Caco-2 (cell line): ENCODE measurements at regions of chr2 and their contacts with region 1.

Region 1: GRCh38 chr2:20326163-20326780 is 24.4 kb downstream of the PUM2 start:
- DNase-seq: peak; percentile 63 to 65
- H3K4me3 ChIP-seq: no peak overlapping the region
- H3K4me3 Mint-ChIP-seq: no peak overlapping the region
- H3K27ac Mint-ChIP-seq: no peak overlapping the region
- H3K4me1 ChIP-seq: peaks cover 19% of the 10 kb centered on the region
- H3K4me1 Mint-ChIP-seq: peaks cover 27% of the 10 kb centered on the region
- H3K27me3 ChIP-seq: no peaks in the 10 kb centered on the region
- H3K27me3 Mint-ChIP-seq: no peaks in the 10 kb centered on the region
- CTCF ChIP-seq: peak; percentile 76 to 90

Region 2: DNA sequence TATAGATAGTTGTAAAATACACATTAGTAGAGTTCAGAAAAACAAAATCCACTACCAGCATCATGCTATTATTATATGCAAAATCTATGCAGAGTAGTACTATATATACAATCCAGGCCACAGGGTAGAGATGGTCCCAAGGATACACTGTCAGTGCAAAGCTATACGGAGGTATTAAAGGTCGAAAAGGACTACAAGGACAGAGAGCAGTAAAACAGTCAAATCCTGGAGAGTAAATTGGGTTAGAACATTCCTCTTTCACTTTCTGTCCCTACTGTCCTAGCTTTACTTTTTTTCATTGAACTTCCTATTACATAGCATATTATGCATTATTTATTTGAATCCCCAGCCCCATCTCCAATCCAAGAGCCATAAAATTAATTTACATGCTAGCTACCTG is 61.6 kb before region 1 on chr2:
- CTCF ChIA-PET with region 1: no interaction called
- POLR2A ChIA-PET with region 1: no interaction called
- intact Hi-C with region 1: loop called (anchors 2 kb)
- DNase-seq: no peak
- H3K4me3 ChIP-seq: no peak overlapping the region
- H3K4me3 Mint-ChIP-seq: no peak overlapping the region
- H3K27ac Mint-ChIP-seq: no peak overlapping the region
- H3K4me1 ChIP-seq: no peaks in the 10 kb centered on the region
- H3K4me1 Mint-ChIP-seq: no peaks in the 10 kb centered on the region
- H3K27me3 ChIP-seq: no peaks in the 10 kb centered on the region
- H3K27me3 Mint-ChIP-seq: no peaks in the 10 kb centered on the region
- CTCF ChIP-seq: no peak

Region 3: DNA sequence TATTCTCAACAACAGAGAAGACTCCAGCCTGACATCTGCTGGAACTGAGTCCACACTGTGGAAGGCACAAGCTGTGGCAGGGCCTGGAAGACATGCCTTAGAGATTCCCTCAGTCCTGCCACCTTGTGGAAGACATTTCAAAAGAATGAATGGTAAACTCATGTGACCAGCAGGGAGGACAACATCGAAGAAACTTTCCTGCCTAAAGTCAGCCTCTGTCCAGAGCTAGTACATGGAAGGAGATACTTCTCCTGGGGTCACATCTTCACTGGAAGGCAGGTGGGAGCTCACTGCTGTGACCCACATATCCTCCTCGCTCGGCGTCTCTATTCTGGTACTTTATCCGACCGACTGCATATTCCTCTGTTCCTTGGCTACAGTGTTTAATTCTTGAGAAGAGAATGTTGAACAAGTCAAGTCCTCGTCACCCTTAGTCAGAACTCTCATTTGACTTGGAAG is 35.1 kb before region 1 on chr2:
- CTCF ChIA-PET with region 1: interaction called, 6 read pairs
- POLR2A ChIA-PET with region 1: no interaction called
- intact Hi-C with region 1: loop called (anchors 2 kb)
- DNase-seq: peak; percentile 83 to 86
- H3K4me3 ChIP-seq: no peak overlapping the region
- H3K4me3 Mint-ChIP-seq: no peak overlapping the region
- H3K27ac Mint-ChIP-seq: no peak overlapping the region
- H3K4me1 ChIP-seq: peaks cover 11% of the 10 kb centered on the region
- H3K4me1 Mint-ChIP-seq: peaks cover 7% of the 10 kb centered on the region
- H3K27me3 ChIP-seq: no peaks in the 10 kb centered on the region
- H3K27me3 Mint-ChIP-seq: no peaks in the 10 kb centered on the region
- CTCF ChIP-seq: peak; percentile 77 to 80

Region 4: GRCh38 chr2:20304411-20304810 is 21.9 kb before region 1 on chr2:
- CTCF ChIA-PET with region 1: interaction called, 3 read pairs
- POLR2A ChIA-PET with region 1: no interaction called
- intact Hi-C with region 1: loop called (anchors 1 kb)
- DNase-seq: no peak
- H3K4me3 ChIP-seq: no peak overlapping the region
- H3K4me3 Mint-ChIP-seq: no peak overlapping the region
- H3K27ac Mint-ChIP-seq: no peak overlapping the region
- H3K4me1 ChIP-seq: 0 out of 2 replicates have a peak, but pooled peaks cover 12% of the 10 kb centered on the region
- H3K4me1 Mint-ChIP-seq: peaks cover 25% of the 10 kb centered on the region
- H3K27me3 ChIP-seq: no peaks in the 10 kb centered on the region
- H3K27me3 Mint-ChIP-seq: no peaks in the 10 kb centered on the region
- CTCF ChIP-seq: no peak

Region 5: DNA sequence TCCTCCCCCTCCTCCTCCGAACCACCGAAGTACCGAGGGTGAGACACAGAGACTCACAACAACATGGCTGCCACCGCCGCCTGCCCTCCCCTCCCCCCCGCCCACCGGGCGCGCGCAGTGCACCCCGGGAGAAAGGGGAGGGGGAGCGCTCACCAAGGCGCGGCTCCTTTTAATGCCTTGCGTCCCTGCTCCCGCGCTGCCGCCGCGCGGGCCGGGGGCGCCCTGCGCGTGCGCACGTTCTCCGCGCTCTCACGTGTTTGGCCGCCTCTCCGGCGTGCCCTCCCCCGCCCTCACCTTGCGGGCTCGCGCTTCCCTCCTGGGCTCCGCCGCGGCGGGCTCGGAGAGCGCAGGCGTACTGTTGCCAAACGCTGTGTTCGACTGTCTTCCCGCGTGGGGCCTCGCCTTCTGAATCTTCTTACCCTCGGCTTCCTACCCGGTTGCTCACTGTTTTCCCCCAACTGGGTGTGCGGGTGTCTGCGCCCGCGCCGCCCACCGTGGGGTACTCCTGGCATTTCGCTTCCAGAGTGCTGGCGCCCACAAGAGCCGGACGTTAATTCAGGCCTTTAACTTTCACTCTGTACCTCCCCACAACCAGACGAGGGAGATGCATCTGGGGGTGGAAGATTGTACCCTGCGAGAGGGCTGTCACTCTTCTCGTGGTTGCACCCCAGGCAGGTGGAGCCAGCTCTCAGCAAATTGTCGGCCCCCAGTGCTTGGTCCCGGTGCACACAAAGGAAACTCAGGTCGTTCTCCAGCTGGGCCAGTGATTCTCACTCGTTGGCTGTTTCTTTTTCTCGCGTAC is 24.7 kb after region 1 on chr2 and contains the start of gene PUM2:
- CTCF ChIA-PET with region 1: no interaction called
- POLR2A ChIA-PET with region 1: no interaction called
- intact Hi-C with region 1: loop called (anchors 2 kb)
- DNase-seq: peak; percentile 97 to 98
- H3K4me3 ChIP-seq: peak within 1 kb of the TSS; percentile 95
- H3K4me3 Mint-ChIP-seq: no peak within 1 kb of the TSS
- H3K27ac Mint-ChIP-seq: peak within 1 kb of the TSS; percentile 90
- H3K4me1 ChIP-seq: peaks cover 48% of the 10 kb centered on the region
- H3K4me1 Mint-ChIP-seq: peaks cover 12% of the 10 kb centered on the region
- H3K27me3 ChIP-seq: no peaks in the 10 kb centered on the region
- H3K27me3 Mint-ChIP-seq: no peaks in the 10 kb centered on the region
- CTCF ChIP-seq: no peak
- total RNA-seq, gene PUM2: 117 and 119 TPM in 2 replicates

Region 6: GRCh38 chr2:20781656-20782265 is 455.5 kb after region 1 on chr2:
- CTCF ChIA-PET with region 1: no interaction called
- POLR2A ChIA-PET with region 1: no interaction called
- intact Hi-C with region 1: no loop called
- DNase-seq: peak in 1 of 2 experiments; percentile 43
- H3K4me3 ChIP-seq: no peak overlapping the region
- H3K4me3 Mint-ChIP-seq: no peak overlapping the region
- H3K27ac Mint-ChIP-seq: no peak overlapping the region
- H3K4me1 ChIP-seq: peaks cover 7% of the 10 kb centered on the region; the same call in 1 of the 2 replicates
- H3K4me1 Mint-ChIP-seq: peaks cover 15% of the 10 kb centered on the region
- H3K27me3 ChIP-seq: no peaks in the 10 kb centered on the region
- H3K27me3 Mint-ChIP-seq: no peaks in the 10 kb centered on the region
- CTCF ChIP-seq: peak; percentile 57 to 75